Mammary epithelial cell (primary cell): ENCODE measurements at regions of chr1 and their contacts with region 1.

Region 1: DNA sequence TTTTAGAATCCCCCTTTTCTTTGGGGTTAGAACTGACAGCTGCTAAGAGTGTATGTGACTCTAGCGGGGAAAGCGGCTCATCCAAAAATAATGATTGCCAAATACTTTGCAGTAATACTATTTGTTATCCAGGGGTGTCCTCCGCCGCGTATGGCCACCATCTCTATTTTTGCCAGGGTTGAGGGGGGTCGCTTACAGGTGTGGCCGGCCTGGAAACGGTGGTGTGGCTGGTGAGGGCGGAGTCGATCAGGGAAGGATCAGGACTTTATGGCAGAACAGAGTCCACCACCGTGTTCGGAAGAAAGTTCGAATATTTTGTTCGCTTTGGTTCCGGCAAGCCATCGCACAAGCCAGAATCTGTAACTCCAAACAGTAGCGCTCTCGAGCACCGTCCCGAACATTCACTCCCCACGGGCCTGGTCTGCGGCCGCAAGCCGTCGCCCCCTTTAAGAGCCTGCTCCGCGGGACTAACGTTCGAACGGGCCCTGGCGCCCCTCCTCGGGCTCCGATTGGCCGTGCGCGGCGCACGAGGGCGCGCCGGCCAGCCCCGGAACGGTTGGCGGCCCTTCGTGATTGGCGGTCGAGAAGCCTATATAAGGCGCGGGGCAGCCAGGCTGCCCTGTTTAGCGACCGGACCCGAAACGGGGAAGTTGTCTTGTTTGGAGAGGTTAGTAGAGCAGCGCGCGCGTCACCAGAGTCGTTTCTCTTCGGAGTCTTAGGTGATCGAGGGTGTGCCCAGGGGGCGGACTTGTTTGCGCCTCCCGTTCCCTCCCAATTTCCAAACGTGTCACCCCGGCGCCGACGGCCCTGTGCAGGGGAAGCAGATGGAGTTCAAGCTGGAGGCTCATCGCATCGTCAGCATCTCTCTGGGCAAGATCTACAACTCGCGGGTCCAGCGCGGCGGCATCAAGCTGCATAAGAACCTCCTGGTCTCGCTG is at the start of gene IER5:
- DNase-seq: peak; percentile 97
- H3K4me3 ChIP-seq: peak within 1 kb of the TSS; percentile 87 to 93 (median 89)
- H3K27ac ChIP-seq: peak within 1 kb of the TSS; percentile 96
- H3K4me1 ChIP-seq: peaks cover 29% of the 10 kb centered on the region
- H3K27me3 ChIP-seq: no peaks in the 10 kb centered on the region
- CTCF ChIP-seq: no peak
- total RNA-seq, gene IER5: 16.3 to 37.5 TPM

Region 2: GRCh38 chr1:180168786-180169639 is 919.3 kb before region 1 on chr1:
- CTCF ChIA-PET with region 1: no interaction called
- dilution Hi-C with region 1: no loop called
- in situ Hi-C with region 1: no loop called
- intact Hi-C with region 1: no loop called
- DNase-seq: no peak
- H3K4me3 ChIP-seq: no peak overlapping the region
- H3K27ac ChIP-seq: no peak overlapping the region
- H3K4me1 ChIP-seq: peaks cover 32% of the 10 kb centered on the region
- H3K27me3 ChIP-seq: no peaks in the 10 kb centered on the region
- CTCF ChIP-seq: peak; percentile 51 to 66

Region 3: GRCh38 chr1:180778782-180779398 is 309.5 kb before region 1 on chr1:
- CTCF ChIA-PET with region 1: no interaction called
- dilution Hi-C with region 1: no loop called
- in situ Hi-C with region 1: no loop called
- intact Hi-C with region 1: loop called (anchors 5 kb)
- DNase-seq: peak; percentile 12
- H3K4me3 ChIP-seq: no peak overlapping the region
- H3K27ac ChIP-seq: no peak overlapping the region
- H3K4me1 ChIP-seq: no peaks in the 10 kb centered on the region
- H3K27me3 ChIP-seq: no peaks in the 10 kb centered on the region
- CTCF ChIP-seq: peak; percentile 63 to 66

Region 4: GRCh38 chr1:181033799-181034451 is 54.4 kb before region 1 on chr1 and contains the start of gene MR1:
- CTCF ChIA-PET with region 1: no interaction called
- dilution Hi-C with region 1: loop called (anchors 5 kb)
- in situ Hi-C with region 1: no loop called
- intact Hi-C with region 1: loop called (anchors 1 kb)
- DNase-seq: peak; percentile 86
- H3K4me3 ChIP-seq: peak within 1 kb of the TSS; percentile 61 to 62 (median 62)
- H3K27ac ChIP-seq: peak within 1 kb of the TSS; percentile 94
- H3K4me1 ChIP-seq: peaks cover 21% of the 10 kb centered on the region
- H3K27me3 ChIP-seq: no peaks in the 10 kb centered on the region
- CTCF ChIP-seq: no peak
- total RNA-seq, gene MR1: 20.4 to 46.3 TPM

Region 5: GRCh38 chr1:181112071-181112929 is 24.0 kb after region 1 on chr1:
- CTCF ChIA-PET with region 1: no interaction called
- dilution Hi-C with region 1: no loop called
- in situ Hi-C with region 1: no loop called
- intact Hi-C with region 1: loop called (anchors 1 kb)
- DNase-seq: peak; percentile 100
- H3K4me3 ChIP-seq: no peak overlapping the region
- H3K27ac ChIP-seq: peak overlapping the region; percentile 79
- H3K4me1 ChIP-seq: peaks cover 51% of the 10 kb centered on the region
- H3K27me3 ChIP-seq: no peaks in the 10 kb centered on the region
- CTCF ChIP-seq: no peak

Region 6: GRCh38 chr1:181142096-181142958 is 54.0 kb after region 1 on chr1:
- CTCF ChIA-PET with region 1: interaction called, 4 read pairs
- dilution Hi-C with region 1: no loop called
- in situ Hi-C with region 1: loop called (anchors 5 kb)
- intact Hi-C with region 1: loop called (anchors 1 kb)
- DNase-seq: peak; percentile 84
- H3K4me3 ChIP-seq: peak overlapping the region in 1 of 3 experiments; percentile 33
- H3K27ac ChIP-seq: peak overlapping the region; percentile 63
- H3K4me1 ChIP-seq: peaks cover 49% of the 10 kb centered on the region
- H3K27me3 ChIP-seq: no peaks in the 10 kb centered on the region
- CTCF ChIP-seq: peak; percentile 95 to 97

Region 7: GRCh38 chr1:182092336-182092735 is 1004.0 kb after region 1 on chr1:
- CTCF ChIA-PET with region 1: no interaction called
- dilution Hi-C with region 1: no loop called
- in situ Hi-C with region 1: no loop called
- intact Hi-C with region 1: no loop called
- DNase-seq: no peak
- H3K4me3 ChIP-seq: no peak overlapping the region
- H3K27ac ChIP-seq: no peak overlapping the region
- H3K4me1 ChIP-seq: peaks cover 42% of the 10 kb centered on the region
- H3K27me3 ChIP-seq: no peaks in the 10 kb centered on the region
- CTCF ChIP-seq: no peak